PC-9 (cell line): ENCODE measurements at regions of chr1 and their contacts with region 1.

Region 1: GRCh38 chr1:79539001-79539400 is 532.5 kb upstream of the ADGRL4 start:
- DNase-seq: no peak
- H3K4me3 ChIP-seq: no peak overlapping the region
- H3K27ac ChIP-seq: no peak overlapping the region
- H3K4me1 ChIP-seq: no peaks in the 10 kb centered on the region
- H3K27me3 ChIP-seq: no peaks in the 10 kb centered on the region
- CTCF ChIP-seq: no peak

Region 2: GRCh38 chr1:78401148-78401547 is 1137.9 kb before region 1 on chr1:
- CTCF ChIA-PET with region 1: no interaction called
- POLR2A ChIA-PET with region 1: interaction called, 10 read pairs
- intact Hi-C with region 1: no loop called
- DNase-seq: no peak
- H3K4me3 ChIP-seq: no peak overlapping the region
- H3K27ac ChIP-seq: no peak overlapping the region
- H3K4me1 ChIP-seq: no peaks in the 10 kb centered on the region
- H3K27me3 ChIP-seq: no peaks in the 10 kb centered on the region
- CTCF ChIP-seq: no peak

Region 3: DNA sequence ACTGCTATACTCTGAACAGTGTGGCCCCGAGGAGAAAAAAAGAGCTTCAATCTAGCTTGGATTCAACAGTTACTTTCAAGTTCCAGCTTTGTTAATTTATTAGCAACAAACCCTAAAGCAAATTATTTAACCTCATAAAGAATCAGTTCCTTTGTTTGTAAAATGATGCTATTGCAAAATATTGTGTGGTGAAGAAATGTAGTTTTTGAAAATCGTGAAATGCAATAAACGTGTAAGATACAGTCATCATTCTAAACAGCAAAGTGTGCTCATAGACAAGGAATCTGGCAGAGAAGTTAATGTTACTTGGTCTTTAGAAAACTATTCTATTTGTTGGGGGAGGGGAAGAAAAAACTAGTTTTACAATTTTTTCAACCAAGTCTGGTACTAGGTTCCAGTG is 234.9 kb before region 1 on chr1:
- CTCF ChIA-PET with region 1: no interaction called
- POLR2A ChIA-PET with region 1: no interaction called
- intact Hi-C with region 1: no loop called
- DNase-seq: no peak
- H3K4me3 ChIP-seq: no peak overlapping the region
- H3K27ac ChIP-seq: no peak overlapping the region
- H3K4me1 ChIP-seq: no peaks in the 10 kb centered on the region
- H3K27me3 ChIP-seq: no peaks in the 10 kb centered on the region
- CTCF ChIP-seq: no peak

Region 4: GRCh38 chr1:79667848-79668696 is 129.1 kb after region 1 on chr1:
- CTCF ChIA-PET with region 1: no interaction called
- POLR2A ChIA-PET with region 1: no interaction called
- intact Hi-C with region 1: no loop called
- DNase-seq: no peak
- H3K4me3 ChIP-seq: no peak overlapping the region
- H3K27ac ChIP-seq: no peak overlapping the region
- H3K4me1 ChIP-seq: no peaks in the 10 kb centered on the region
- H3K27me3 ChIP-seq: no peaks in the 10 kb centered on the region
- CTCF ChIP-seq: no peak